A673 (cell line): ENCODE measurements at regions of chr22 and their contacts with region 1.

Region 1: DNA sequence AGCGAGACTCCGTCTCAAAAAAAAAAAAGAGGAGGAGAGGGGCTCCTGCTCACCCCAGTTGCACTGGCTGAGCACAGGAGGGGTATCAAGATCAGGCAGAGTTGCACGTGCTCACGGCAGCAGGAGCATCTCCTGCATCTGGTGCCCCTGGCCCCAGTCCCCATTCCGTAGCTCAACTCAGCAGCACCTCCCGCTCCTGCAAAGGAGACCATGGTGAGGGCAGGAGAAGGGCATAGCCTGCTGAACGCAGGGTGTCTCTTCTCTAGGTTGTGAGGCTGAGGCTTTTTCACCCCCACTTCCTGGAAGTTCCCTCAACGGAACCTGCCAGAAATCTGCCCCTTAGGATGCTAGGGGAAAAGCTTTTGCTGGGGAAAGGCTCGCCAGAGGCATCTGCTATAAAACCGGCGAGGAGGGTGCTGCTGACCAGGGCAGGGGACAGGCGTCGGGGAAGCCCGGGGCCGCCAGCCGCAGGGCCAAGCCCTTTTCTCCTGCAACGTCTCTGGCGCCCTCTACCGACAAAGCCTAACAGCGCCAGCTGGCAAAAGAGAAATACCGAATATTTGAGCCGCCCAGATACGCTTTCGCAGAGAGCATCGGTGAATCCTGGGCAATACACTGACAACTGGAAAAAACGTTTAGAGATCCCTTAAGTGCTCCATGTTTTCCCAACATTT is 1.0 kb upstream of the PPP6R2 start:
- DNase-seq: peak; percentile 94
- H3K4me3 ChIP-seq: peak overlapping the region; percentile 91
- H3K27ac ChIP-seq: peak overlapping the region; percentile 78
- H3K4me1 ChIP-seq: peaks cover 3% of the 10 kb centered on the region
- H3K27me3 ChIP-seq: no peaks in the 10 kb centered on the region
- CTCF ChIP-seq: peak; percentile 97

Region 2: DNA sequence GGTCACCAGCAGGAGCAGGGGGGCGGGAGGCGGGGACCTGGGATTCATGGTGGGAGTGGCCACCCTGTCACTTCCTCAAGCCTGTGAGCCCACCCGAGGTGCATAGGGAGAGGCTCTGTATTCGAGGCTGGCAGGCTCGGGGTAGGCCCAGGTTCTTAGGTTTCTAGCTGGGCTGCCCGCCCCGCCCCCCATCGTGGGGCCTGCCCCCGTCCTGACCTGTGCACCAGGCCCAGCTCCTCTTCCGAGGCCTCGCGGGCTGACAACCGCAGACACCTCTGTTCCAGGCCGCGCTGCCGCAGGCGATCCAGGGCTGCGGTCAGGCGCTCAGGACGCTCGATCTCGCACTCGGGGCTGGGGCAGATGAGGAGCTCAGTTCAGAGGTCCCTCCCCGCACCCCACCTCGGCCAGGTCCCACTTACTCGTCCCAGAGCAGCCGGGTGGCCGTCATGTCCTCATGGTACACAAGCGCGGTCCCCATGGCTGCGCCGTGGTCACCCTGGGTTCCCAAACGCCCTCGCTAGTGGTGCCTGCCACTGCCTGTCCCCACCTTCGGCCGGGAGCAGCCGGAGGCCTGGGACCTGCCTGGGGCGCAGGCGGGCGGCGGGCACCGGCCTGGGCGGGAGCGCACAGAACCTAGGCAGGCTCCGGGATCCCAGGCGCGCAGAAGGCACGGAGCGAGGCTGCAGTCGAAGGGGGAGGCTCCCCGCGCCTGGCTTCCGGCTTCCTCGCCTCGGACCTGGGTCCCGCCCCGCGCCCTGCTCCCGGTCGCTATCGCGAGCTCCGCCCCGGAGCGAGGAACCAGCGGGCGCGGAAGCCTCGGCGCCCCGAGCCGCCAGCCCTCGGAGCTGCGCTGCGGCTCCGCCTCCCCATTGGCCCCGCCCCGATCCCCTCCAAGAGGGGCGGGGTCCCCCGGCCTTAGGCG is 91.3 kb before region 1 on chr22 and contains the start of gene HDAC10:
- CTCF ChIA-PET with region 1: no interaction called
- POLR2A ChIA-PET with region 1: no interaction called
- intact Hi-C with region 1: loop called (anchors 2 kb)
- DNase-seq: peak; percentile 93
- H3K4me3 ChIP-seq: peak within 1 kb of the TSS; percentile 78
- H3K27ac ChIP-seq: peak within 1 kb of the TSS; percentile 87
- H3K4me1 ChIP-seq: peaks cover 7% of the 10 kb centered on the region
- H3K27me3 ChIP-seq: no peaks in the 10 kb centered on the region
- CTCF ChIP-seq: no peak
- total RNA-seq, gene HDAC10: 38.6 and 42.8 TPM in 2 replicates

Region 3: DNA sequence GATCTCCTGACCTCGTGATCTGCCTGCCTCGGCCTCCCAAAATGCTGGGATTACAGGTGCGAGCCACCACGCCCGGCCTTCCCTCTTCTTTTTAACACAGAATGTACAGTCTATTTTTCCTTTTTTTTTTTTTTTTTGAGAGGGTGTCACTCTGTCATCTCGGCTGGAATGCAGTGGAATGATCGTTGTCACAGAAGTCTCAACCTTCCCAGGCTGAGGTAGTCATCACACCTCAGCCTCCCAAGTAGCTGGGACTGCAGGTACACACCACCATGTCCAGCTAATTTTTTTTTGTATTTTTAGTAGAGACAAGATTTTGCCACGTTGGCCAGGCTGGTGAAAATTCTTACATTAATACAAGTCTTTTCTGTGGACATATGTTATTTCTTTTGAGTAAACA is 14.1 kb after region 1 on chr22:
- CTCF ChIA-PET with region 1: no interaction called
- POLR2A ChIA-PET with region 1: no interaction called
- intact Hi-C with region 1: no loop called
- DNase-seq: no peak
- H3K4me3 ChIP-seq: no peak overlapping the region
- H3K27ac ChIP-seq: no peak overlapping the region
- H3K4me1 ChIP-seq: no peaks in the 10 kb centered on the region
- H3K27me3 ChIP-seq: no peaks in the 10 kb centered on the region
- CTCF ChIP-seq: no peak

Region 4: GRCh38 chr22:50376085-50376651 is 34.1 kb after region 1 on chr22:
- CTCF ChIA-PET with region 1: no interaction called
- POLR2A ChIA-PET with region 1: no interaction called
- intact Hi-C with region 1: no loop called
- DNase-seq: no peak
- H3K4me3 ChIP-seq: no peak overlapping the region
- H3K27ac ChIP-seq: no peak overlapping the region
- H3K4me1 ChIP-seq: no peaks in the 10 kb centered on the region
- H3K27me3 ChIP-seq: no peaks in the 10 kb centered on the region
- CTCF ChIP-seq: no peak